Caco-2 (cell line): ENCODE measurements at regions of chr18 and their contacts with region 1.

Region 1: GRCh38 chr18:13112982-13113381 is 105.6 kb upstream of the LDLRAD4 start:
- DNase-seq: peak; percentile 83 to 84
- H3K4me3 ChIP-seq: no peak overlapping the region
- H3K4me3 Mint-ChIP-seq: no peak overlapping the region
- H3K27ac Mint-ChIP-seq: no peak overlapping the region
- H3K4me1 ChIP-seq: no peaks in the 10 kb centered on the region
- H3K4me1 Mint-ChIP-seq: no peaks in the 10 kb centered on the region
- H3K27me3 ChIP-seq: no peaks in the 10 kb centered on the region
- H3K27me3 Mint-ChIP-seq: no peaks in the 10 kb centered on the region
- CTCF ChIP-seq: peak; percentile 64 to 79

Region 2: GRCh38 chr18:13137670-13138419 is 24.9 kb after region 1 on chr18:
- CTCF ChIA-PET with region 1: interaction called, 4 read pairs
- POLR2A ChIA-PET with region 1: no interaction called
- intact Hi-C with region 1: loop called (anchors 1 kb)
- DNase-seq: peak; percentile 87 to 94
- H3K4me3 ChIP-seq: peak overlapping the region; percentile 56
- H3K4me3 Mint-ChIP-seq: peak overlapping the region; percentile 98
- H3K27ac Mint-ChIP-seq: peak overlapping the region; percentile 72
- H3K4me1 ChIP-seq: peaks cover 6% of the 10 kb centered on the region
- H3K4me1 Mint-ChIP-seq: peaks cover 7% of the 10 kb centered on the region
- H3K27me3 ChIP-seq: no peaks in the 10 kb centered on the region
- H3K27me3 Mint-ChIP-seq: no peaks in the 10 kb centered on the region
- CTCF ChIP-seq: no peak

Region 3: DNA sequence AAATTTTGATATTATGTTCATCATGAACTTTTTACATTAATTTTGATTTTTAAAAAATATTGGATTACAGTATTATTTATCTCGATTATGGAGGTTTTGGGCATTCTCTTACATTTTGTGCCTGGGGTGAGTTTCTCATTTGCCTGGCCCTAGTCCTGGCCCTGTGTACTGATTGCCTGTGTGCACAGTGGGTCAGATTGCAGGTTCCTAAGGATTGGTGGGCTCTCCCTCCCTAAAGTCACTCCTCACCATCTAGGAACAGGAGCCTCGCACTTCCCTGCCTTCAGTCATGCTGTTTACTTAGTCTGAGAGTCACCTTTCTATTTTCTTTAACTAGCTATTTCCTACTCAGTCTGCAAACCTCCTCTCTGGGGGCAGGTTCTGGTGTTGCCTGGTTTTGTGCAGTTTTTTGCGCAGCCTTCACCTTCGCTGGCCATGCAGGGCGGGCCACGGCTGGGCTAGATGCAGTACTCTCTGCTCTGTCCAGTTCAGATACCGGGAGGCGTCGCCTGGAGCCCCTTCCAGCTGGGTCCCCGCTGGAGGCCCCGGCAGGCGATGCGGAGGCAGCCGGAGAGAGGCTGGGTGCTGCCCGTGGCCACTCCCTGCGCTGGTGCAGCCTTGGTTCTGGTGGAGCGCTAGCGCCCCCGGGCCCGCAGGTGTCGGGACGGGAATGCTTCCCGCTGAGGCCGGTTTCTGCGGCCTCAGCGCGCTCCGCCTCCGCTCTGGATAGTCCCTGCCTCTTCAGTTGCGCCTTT is 687.7 kb after region 1 on chr18:
- CTCF ChIA-PET with region 1: no interaction called
- POLR2A ChIA-PET with region 1: no interaction called
- intact Hi-C with region 1: loop called (anchors 2 kb)
- DNase-seq: peak; percentile 78 to 84
- H3K4me3 ChIP-seq: peak overlapping the region; percentile 27
- H3K4me3 Mint-ChIP-seq: peak overlapping the region; percentile 73
- H3K27ac Mint-ChIP-seq: no peak overlapping the region
- H3K4me1 ChIP-seq: no peaks in the 10 kb centered on the region
- H3K4me1 Mint-ChIP-seq: peaks cover 11% of the 10 kb centered on the region
- H3K27me3 ChIP-seq: no peaks in the 10 kb centered on the region
- H3K27me3 Mint-ChIP-seq: peaks cover 7% of the 10 kb centered on the region
- CTCF ChIP-seq: peak; percentile 47 to 86